ENCODE measurements at regions of chr10 and their contacts with region 1.

Region 1: GRCh38 chr10:24008164-24009091 is 200.5 kb upstream of the KIAA1217 start:
- ATAC-seq: peak; percentile 32 to 98 (median 88)
- H3K4me3 ChIP-seq: no peak overlapping the region
- H3K27ac ChIP-seq: no peak overlapping the region
- H3K4me1 ChIP-seq: peaks cover 14% of the 10 kb centered on the region in 2 donors

Region 2: GRCh38 chr10:23768270-23768669 is 240.2 kb before region 1 on chr10:
- in situ Hi-C with region 1: no loop called
- ATAC-seq: no peak
- H3K4me3 ChIP-seq: no peak overlapping the region
- H3K27ac ChIP-seq: no peak overlapping the region
- H3K4me1 ChIP-seq: no peaks in the 10 kb centered on the region

Region 3: GRCh38 chr10:24197263-24197662 is 188.8 kb after region 1 on chr10:
- in situ Hi-C with region 1: loop called in 1 of 9 experiments (anchors 25 kb)
- ATAC-seq: no peak
- H3K4me3 ChIP-seq: no peak overlapping the region
- H3K27ac ChIP-seq: no peak overlapping the region
- H3K4me1 ChIP-seq: no peaks in the 10 kb centered on the region